ENCODE measurements at regions of chr6 and their contacts with region 1.

Region 1: DNA sequence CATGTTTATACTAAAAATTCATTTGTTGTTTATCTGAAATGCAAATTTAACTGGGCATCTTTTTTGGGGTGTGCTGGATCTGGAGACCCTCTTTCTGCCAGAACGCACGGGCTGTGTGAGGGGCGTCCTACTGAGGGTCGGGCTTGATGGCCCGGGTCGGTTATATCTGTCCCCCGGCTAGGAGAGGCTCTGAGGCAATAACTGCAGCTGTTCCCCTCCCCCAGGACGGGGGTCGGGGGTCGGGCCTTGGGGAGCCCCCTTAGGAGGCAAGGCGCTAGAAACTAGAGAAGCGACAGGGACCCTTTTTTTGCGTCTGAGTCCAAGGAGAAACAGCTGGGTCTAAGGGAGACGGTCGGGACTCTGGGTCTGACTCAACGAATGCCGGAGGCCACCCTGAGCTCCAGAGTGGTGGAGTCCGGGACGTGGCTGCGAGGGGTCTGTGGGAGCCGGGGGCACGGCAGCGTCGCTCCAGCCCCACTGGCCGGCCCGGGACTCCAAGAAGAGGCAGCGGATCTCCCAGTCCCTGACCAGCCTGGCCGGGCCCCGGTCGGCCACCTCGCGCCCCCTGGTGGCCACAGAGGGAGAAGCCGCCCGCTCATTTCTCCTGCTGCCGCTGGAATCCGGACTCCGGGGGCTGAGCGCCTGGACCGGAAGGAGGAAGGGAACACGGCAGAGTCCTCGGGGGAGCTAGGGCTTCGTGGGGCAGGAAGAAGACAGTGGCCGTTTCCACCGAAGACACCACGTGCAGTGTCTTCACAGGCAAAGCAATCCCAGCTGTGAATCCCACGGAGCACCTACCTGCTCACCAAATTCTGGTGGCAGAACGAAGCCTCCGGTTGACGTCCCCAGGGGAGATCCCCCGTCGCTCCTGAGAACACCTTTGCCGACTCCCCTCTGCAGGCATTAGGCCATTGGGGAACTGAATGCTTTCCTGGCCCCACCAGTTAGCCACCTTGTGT is 24.0 kb upstream of the SCML4 start:
- DNase-seq: peak; percentile 39 to 61 (median 53)
- H3K4me3 ChIP-seq: peak overlapping the region; percentile 24 to 76 (median 69)
- H3K27ac ChIP-seq: no peak overlapping the region
- H3K4me1 ChIP-seq: peaks cover 0 to 13% (median 11%) of the 10 kb centered on the region in 4 experiments
- H3K27me3 ChIP-seq: peaks cover 0 to 12% (median 7%) of the 10 kb centered on the region in 5 experiments

Region 2: DNA sequence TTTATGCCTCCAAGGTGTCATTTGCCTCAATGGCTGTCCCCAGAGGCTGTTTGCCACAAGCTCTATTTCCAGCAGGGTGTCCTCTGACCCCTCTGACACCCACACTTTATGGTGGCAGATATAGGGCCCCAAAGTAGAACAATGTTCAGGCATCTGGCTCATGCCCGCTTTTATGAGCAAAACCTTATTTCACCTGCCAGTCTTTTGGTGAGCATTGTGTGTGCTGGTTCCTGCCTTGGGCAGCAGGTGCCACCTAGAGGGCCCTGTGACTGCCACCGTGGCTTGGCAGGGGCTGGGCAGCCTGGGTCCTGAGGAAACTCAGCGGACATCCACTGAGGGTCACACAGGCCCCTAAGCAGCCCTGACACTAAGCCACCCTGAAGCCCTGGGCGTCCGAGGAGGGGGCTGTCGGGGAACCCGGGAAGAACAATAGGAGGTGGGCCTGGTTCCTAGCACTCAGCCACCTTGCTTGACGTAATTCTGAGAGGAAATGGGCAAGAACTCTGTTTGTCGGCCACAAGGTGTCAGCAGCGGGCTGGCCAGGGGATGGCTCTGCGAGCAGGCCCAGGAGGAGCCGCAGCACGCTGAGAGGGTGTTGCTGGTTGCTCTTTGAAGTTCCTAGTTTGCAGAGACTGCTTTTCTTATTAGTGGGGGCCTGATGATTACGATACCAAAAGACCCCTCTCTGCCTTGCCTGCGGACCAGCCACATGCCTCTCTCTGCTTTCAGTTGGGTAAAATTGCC is 173.0 kb before region 1 on chr6:
- CTCF ChIA-PET with region 1: interaction called, 15 read pairs
- POLR2A ChIA-PET with region 1: no interaction called
- DNase-seq: peak; percentile 87 to 93 (median 93)
- H3K4me3 ChIP-seq: peak overlapping the region in 5 of 7 experiments; percentile 6 to 60 (median 44)
- H3K27ac ChIP-seq: peak overlapping the region in 1 of 2 experiments; percentile 64
- H3K4me1 ChIP-seq: peaks cover 3 to 22% (median 14%) of the 10 kb centered on the region in 4 experiments
- H3K27me3 ChIP-seq: peaks cover 0 to 3% (median 0%) of the 10 kb centered on the region in 5 experiments

Region 3: DNA sequence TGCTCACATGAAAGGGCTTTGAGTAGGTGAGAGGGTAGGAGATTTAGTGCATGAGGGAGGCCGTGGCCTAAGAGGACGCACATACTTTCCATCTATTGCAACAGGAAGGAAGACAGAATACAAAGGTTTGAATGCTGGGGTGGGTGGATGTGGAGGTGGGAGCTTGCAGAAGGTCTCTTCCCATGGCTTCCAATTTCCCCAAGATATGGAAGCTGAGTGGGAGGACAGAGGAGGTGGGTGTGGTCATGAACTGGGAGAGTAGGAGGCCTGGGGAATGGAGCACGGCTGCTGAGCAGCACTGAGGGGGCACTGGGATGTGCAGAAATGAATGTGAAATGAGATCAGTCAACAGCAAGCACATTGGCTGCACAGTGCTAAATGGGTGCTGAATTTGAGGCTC is 94.3 kb before region 1 on chr6:
- CTCF ChIA-PET with region 1: no interaction called
- POLR2A ChIA-PET with region 1: no interaction called
- DNase-seq: no peak
- H3K4me3 ChIP-seq: no peak overlapping the region
- H3K27ac ChIP-seq: no peak overlapping the region
- H3K4me1 ChIP-seq: no peaks in the 10 kb centered on the region
- H3K27me3 ChIP-seq: no peaks in the 10 kb centered on the region

Region 4: GRCh38 chr6:107813555-107814194 is 34.4 kb before region 1 on chr6:
- CTCF ChIA-PET with region 1: interaction called, 10 read pairs
- POLR2A ChIA-PET with region 1: no interaction called
- DNase-seq: no peak
- H3K4me3 ChIP-seq: no peak overlapping the region
- H3K27ac ChIP-seq: no peak overlapping the region
- H3K4me1 ChIP-seq: no peaks in the 10 kb centered on the region
- H3K27me3 ChIP-seq: no peaks in the 10 kb centered on the region

Region 5: GRCh38 chr6:107820338-107821261 is 27.5 kb before region 1 on chr6:
- CTCF ChIA-PET with region 1: interaction called, 14 read pairs
- POLR2A ChIA-PET with region 1: interaction called, 4 read pairs
- DNase-seq: peak; percentile 43 to 77 (median 68)
- H3K4me3 ChIP-seq: peak overlapping the region in 6 of 7 experiments; percentile 7 to 95 (median 50)
- H3K27ac ChIP-seq: peak overlapping the region in 1 of 2 experiments; percentile 49
- H3K4me1 ChIP-seq: peaks cover 16 to 49% (median 39%) of the 10 kb centered on the region in 4 experiments
- H3K27me3 ChIP-seq: no peaks in the 10 kb centered on the region

Region 6: GRCh38 chr6:107832151-107833056 is 15.7 kb before region 1 on chr6:
- CTCF ChIA-PET with region 1: interaction called, 36 read pairs
- POLR2A ChIA-PET with region 1: no interaction called
- DNase-seq: peak in 2 of 3 donors; percentile 53 to 63
- H3K4me3 ChIP-seq: peak overlapping the region in 1 of 7 experiments; percentile 11
- H3K27ac ChIP-seq: no peak overlapping the region
- H3K4me1 ChIP-seq: peaks cover 12 to 15% (median 14%) of the 10 kb centered on the region in 4 experiments
- H3K27me3 ChIP-seq: no peaks in the 10 kb centered on the region

Region 7: DNA sequence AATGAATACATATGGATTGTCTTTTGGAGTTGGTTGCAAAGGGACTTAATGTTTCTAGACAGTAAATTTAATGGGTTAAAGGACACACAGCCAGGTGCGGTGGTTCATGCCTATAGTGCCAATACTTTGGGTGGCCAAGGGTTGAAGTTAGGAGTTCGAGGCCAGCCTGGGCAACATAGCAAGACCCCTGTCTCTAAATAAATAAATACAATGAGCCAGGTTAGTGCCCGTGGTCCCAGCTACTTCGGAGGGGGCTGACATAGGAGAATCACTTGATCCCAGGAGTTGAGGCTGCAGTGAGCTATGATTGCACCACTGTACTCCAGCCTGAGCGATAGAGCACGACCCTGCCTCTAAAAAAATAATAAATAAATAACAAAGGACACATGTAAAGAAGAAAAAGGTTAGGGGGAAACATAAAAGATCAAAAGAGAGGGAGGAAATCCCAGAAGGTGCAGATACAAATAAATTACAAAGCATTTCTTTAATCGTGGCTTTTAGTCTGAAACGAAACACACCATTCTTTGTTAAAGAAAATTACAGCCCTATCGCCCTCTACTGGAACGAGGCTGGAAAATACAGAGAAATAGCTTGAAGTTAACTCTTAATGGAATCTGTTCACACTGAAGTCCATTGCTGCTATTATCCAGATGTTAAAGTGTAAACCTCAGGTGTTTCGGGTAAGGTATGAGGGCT is 18.6 kb after region 1 on chr6:
- CTCF ChIA-PET with region 1: interaction called, 11 read pairs
- POLR2A ChIA-PET with region 1: no interaction called
- DNase-seq: peak; percentile 42 to 70 (median 59)
- H3K4me3 ChIP-seq: no peak overlapping the region
- H3K27ac ChIP-seq: no peak overlapping the region
- H3K4me1 ChIP-seq: no peaks in the 10 kb centered on the region
- H3K27me3 ChIP-seq: no peaks in the 10 kb centered on the region

Region 8: DNA sequence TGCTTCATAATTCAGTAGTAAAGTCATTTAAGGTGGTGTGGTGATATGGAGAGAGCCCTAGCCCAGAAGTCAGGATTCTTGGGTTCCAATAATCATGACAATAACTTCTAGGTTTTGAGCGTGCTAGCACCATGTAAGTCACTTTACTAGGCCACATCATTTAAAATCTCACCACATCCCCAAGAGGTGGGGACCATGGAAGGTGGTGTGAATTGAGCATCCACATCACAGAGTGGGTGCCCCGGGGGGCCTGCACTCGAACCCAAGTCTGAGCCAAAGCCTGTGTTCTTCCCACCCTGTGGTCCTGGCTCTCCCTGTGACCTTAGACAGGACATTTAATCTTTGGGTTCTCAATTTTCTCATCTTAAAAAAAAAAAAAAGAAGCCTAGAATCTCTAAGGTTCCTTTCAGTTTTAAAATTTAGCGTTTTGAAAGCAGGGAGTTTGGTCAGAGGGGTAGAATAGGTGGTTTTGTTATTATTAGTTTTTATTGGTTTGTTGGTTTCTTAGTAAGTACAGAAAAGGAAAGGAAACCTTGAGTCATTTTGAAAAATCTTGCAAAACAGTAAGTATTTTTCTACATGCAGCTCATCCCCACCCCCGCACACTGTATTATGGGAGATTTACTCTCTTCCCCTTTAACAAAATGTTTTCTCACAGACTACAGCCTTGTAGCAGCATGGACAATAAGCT is 1026.5 kb after region 1 on chr6:
- CTCF ChIA-PET with region 1: no interaction called
- POLR2A ChIA-PET with region 1: no interaction called
- DNase-seq: peak in 2 of 3 donors; percentile 66
- H3K4me3 ChIP-seq: peak overlapping the region in 5 of 7 experiments; percentile 10 to 54 (median 27)
- H3K27ac ChIP-seq: peak overlapping the region in 1 of 2 experiments; percentile 19
- H3K4me1 ChIP-seq: peaks cover 11 to 21% (median 15%) of the 10 kb centered on the region in 4 experiments
- H3K27me3 ChIP-seq: no peaks in the 10 kb centered on the region

Measured in common myeloid progenitor, CD34-positive (primary cell).